Activated CD4-positive, alpha-beta T cell treated with anti-CD3 and anti-CD28 coated beads, Interleukin-2, amount 10 ng/mL, durations not matched to agents 7 days and 5 days (primary cell): ENCODE measurements at regions of chr3 and their contacts with region 1.

Region 1: GRCh38 chr3:10292505-10293419 is at the start of gene GHRL:
- DNase-seq: no peak
- H3K4me3 Mint-ChIP-seq: no peak within 1 kb of the TSS
- H3K27ac Mint-ChIP-seq: peak within 1 kb of the TSS; percentile 59
- H3K4me1 Mint-ChIP-seq: peaks cover 11% of the 10 kb centered on the region
- H3K27me3 Mint-ChIP-seq: no peaks in the 10 kb centered on the region
- total RNA-seq, gene GHRL: 0.30 to 0.56 TPM

Region 2: DNA sequence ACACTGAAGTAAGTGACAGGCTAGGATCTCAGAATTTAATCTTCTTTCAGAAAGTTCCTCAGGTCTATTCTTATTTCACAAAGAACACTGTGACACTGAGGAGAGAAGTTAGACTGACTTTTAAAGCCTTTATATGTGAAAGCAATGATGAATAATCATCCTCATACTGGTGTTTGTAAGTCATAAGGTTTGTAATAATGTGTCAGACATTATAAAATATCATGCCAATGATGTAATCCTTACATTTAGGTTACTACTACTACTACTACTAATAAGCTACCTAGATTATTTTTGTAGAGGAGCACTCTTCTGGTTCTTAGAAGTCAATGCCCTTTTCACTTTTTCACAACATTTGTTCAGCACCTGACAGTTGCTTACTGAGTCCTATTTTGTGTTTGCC is 218.1 kb before region 1 on chr3:
- CTCF ChIA-PET with region 1: no interaction called
- POLR2A ChIA-PET with region 1: interaction called, 10 read pairs
- DNase-seq: no peak
- H3K4me3 Mint-ChIP-seq: no peak overlapping the region
- H3K27ac Mint-ChIP-seq: no peak overlapping the region
- H3K4me1 Mint-ChIP-seq: no peaks in the 10 kb centered on the region
- H3K27me3 Mint-ChIP-seq: no peaks in the 10 kb centered on the region

Region 3: GRCh38 chr3:10274601-10275000 is 18.2 kb before region 1 on chr3:
- CTCF ChIA-PET with region 1: no interaction called
- POLR2A ChIA-PET with region 1: no interaction called
- DNase-seq: no peak
- H3K4me3 Mint-ChIP-seq: no peak overlapping the region
- H3K27ac Mint-ChIP-seq: peak overlapping the region; percentile 54
- H3K4me1 Mint-ChIP-seq: peaks cover 34% of the 10 kb centered on the region
- H3K27me3 Mint-ChIP-seq: no peaks in the 10 kb centered on the region